AG04449 (cell line): ENCODE measurements at regions of chr3 and their contacts with region 1.

Region 1: GRCh38 chr3:42880601-42881451 is 5.1 kb upstream of the CYP8B1 start:
- DNase-seq: no peak
- H3K4me3 ChIP-seq: peak overlapping the region; percentile 67
- CTCF ChIP-seq: peak; percentile 92

Region 2: GRCh38 chr3:42711491-42712343 is 169.1 kb before region 1 on chr3:
- CTCF ChIA-PET with region 1: no interaction called
- POLR2A ChIA-PET with region 1: no interaction called
- DNase-seq: no peak
- H3K4me3 ChIP-seq: no peak overlapping the region
- CTCF ChIP-seq: no peak

Region 3: DNA sequence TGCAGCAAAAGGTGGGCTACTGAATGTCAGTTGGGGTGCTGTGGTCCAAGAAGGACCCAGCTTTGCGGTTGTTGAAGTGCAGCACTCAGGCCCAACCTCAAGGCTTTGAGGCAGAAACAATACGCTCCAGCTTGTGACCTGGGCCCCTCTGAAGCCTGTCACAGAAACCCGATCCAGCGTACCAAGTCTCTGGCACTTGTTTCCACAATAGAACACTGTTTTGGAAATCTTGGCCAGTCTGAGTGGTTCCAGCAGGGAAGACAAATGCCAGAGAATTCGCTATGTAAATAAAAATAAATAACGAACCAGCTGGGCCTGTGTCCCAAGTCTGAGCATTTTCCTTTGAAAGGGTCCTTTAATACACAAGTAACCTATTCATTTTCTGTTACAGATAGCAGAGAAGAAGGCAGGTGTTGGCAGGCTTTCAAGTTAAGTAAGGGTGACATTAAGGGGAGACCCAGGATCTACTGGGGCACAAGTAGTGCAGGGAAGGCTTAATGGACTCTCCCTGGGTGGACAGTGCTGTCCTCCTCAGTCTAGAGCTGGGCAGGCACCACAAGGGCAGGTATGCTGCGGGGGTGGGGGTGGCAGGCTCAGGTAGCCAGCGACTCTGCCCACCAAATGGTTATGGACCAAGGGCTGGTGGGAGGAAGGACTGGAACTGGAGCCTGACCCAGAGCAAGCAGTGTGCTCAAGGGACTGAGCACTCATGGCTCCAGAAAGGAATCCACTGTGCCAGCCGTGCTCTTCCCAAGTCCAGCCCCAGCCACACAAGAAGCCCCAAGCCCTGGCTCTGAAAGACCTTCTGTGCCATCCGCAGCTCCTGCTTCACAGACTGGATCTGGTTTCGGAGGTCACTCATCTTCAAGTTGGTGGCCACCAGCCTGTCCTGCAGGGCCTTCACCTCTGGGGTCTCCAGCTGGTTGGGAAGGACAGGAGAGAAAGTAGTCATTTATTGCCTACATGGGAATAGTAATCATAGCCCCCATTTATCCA is 134.1 kb before region 1 on chr3:
- CTCF ChIA-PET with region 1: interaction called, 14 read pairs
- POLR2A ChIA-PET with region 1: no interaction called
- DNase-seq: no peak
- H3K4me3 ChIP-seq: no peak overlapping the region
- CTCF ChIP-seq: no peak

Region 4: GRCh38 chr3:42780892-42781700 is 99.7 kb before region 1 on chr3:
- CTCF ChIA-PET with region 1: interaction called, 32 read pairs
- POLR2A ChIA-PET with region 1: no interaction called
- DNase-seq: no peak
- H3K4me3 ChIP-seq: no peak overlapping the region
- CTCF ChIP-seq: peak; percentile 45

Region 5: GRCh38 chr3:42831321-42831713 is 49.5 kb before region 1 on chr3:
- CTCF ChIA-PET with region 1: interaction called, 12 read pairs
- POLR2A ChIA-PET with region 1: no interaction called
- DNase-seq: no peak
- H3K4me3 ChIP-seq: no peak overlapping the region
- CTCF ChIP-seq: peak; percentile 52

Region 6: GRCh38 chr3:42892169-42892568 is 11.3 kb after region 1 on chr3:
- CTCF ChIA-PET with region 1: interaction called, 11 read pairs
- POLR2A ChIA-PET with region 1: no interaction called
- DNase-seq: no peak
- H3K4me3 ChIP-seq: no peak overlapping the region
- CTCF ChIP-seq: no peak